Right ventricle myocardium superior (tissue), 1 donor: ENCODE measurements at regions of chr9 and their contacts with region 1.

Region 1: DNA sequence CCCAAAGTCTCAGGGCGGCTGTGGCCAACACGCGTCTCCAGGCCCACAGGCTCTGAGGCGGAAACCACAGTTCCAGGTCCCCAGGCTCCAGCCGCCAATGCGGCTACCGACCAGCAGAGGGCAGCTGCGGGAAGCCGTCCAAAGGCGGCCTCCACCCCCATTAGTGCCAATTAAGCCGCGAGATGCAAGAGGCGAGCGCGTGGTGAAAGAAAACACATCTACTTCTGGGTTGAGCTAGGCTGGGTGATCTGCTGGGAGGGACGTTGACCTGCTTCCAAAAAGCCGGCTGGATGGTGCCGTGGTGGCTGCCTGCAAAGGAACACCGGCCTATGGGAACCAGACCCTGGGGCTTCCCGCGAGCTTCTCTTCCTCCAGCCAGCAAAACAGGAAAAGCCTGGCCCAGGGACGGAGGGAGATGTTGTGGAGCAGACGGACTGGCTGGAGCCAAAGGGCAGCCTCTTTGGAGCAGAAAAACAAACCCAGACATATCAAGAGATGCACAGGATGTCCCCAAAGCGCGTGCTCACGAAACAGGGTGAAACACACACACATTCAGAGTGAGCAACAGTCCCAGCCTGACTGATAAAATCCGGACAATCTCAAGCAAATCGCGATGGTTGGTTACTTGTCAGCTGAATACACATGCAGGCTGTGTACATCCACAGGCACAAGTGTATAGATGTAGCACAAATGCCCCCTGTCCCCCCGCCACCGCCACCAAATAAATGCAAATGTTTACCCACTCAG is 187.1 kb upstream of the BRINP1 start:
- DNase-seq: peak; percentile 80
- ATAC-seq: peak; percentile 96

Region 2: DNA sequence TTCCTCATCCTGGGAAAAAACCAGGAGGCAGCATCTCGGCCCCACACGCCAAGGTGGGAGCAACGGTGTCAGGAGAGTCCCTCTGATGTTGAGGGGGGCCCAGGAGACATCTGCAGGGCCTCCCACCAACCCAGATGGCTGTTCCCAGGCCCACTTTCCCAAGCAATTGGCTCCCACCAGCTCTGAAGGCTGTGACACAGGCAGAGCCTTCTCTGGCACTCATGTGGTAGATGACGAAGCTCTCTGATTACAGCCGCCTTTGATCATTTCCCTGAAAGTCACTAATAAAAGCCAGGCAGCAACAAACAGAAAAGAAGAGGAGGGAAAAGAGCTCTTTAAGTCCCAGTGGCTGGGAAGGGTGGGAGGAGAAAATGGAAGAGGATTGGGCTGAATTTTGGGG is 797.2 kb after region 1 on chr9:
- intact Hi-C with region 1: loop called (anchors 10 kb)
- DNase-seq: no peak
- ATAC-seq: no peak